ENCODE measurements at regions of chr20 and their contacts with region 1.

Region 1: GRCh38 chr20:50744143-50744792 is 12.9 kb downstream of the PARD6B start:
- DNase-seq: no peak
- H3K4me3 ChIP-seq: no peak overlapping the region
- CTCF ChIP-seq: peak; percentile 30

Region 2: DNA sequence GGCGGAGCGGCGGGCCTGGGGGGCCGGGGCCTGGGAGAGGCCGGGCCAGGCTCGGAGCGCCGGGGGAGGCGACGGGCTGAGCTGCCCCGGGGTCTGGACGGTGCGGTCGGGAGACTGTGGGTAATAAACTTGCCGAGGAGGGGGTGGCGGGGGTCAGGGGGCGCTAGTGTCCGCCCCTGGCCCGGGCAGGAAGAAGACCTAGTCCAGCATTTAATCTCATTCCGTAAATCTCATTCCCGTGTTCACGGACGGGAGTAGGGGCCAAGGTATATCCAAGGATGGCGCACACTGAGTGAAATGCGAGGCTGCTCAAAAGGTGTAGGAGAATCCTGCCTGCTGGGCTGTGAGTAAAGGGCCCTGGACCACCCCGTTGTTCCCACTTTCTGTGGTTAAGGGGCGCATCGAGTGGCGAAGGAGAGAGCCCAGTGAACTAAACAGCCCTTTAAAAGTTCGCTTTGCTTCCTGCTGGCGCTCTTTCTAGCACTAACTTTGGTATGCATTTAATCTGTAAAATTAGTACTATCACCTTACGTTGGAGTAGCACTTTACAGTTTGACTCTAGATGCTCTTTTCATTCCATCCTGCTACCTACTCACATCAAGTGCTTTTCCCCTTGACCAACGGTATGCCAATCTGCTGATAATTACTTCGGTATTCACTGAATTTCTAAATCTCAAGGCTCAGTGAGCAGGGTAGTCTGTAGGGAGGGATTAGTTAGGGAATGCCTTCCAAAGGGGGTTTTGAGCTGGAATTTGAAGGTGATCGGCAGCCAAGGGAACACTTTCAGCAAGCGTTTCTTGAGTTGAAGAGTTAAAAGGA is 12.2 kb before region 1 on chr20:
- CTCF ChIA-PET with region 1: interaction called, 14 read pairs
- POLR2A ChIA-PET with region 1: no interaction called
- DNase-seq: no peak
- H3K4me3 ChIP-seq: peak overlapping the region; percentile 65
- CTCF ChIP-seq: no peak

Region 3: DNA sequence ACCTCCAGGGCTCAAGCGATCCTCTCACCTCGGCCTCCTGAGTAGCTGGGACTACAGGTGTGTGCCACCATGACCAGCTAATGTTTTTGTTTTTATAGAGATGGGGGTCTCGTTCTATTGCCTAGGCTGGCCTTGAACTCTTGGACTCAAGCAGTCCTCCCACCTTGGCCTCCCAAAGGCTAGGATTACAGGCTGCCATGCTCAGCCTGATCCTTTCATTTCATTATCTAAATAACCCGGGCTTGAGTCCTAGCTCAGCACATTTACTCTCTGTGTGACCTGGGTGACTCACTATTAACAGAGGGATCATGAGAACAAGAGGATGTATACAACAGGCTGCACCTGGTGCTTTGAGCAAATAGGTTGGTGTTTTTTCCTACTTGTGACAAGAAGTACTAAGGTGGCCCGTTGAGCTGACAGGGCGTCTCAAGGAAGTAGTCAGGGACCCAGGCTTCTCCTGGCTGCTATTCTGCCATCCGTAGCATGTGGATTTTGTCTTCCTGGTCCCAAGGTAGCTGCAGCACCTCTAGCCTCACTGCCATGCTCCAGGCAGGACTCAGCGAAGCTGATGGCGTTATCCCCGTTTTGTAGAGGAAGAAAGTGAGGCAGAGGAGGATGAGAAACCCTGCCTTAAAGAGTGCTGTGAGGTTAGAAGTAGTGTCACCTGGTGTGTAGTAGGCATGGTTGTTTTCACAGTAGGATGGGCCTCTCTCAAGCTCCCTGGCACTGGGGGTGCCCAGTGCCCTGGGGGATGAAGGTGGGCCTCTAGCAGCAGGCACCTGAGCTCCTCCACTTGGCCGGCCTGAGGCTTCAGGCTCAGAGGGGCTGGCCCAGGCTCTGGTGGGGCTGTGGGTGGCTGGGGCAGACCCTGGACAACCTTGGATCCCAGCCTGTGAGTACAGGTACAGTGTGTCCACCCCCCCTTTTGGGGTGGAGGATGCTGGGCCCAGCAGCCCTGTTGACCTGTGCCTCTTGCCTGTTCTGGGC is 124.5 kb after region 1 on chr20:
- CTCF ChIA-PET with region 1: no interaction called
- POLR2A ChIA-PET with region 1: no interaction called
- DNase-seq: no peak
- H3K4me3 ChIP-seq: no peak overlapping the region
- CTCF ChIP-seq: no peak